Activated B cell treated with CpG ODN at 0.5 μM for 24 hours (primary cell): ENCODE measurements at regions of chrX and their contacts with region 1.

Region 1: GRCh38 chrX:119698845-119699244 is 5.9 kb upstream of the SEPTIN6 start:
- DNase-seq: no peak
- ATAC-seq: peak; percentile 19
- H3K4me3 Mint-ChIP-seq: no peak overlapping the region
- H3K27ac Mint-ChIP-seq: no peak overlapping the region
- H3K4me1 Mint-ChIP-seq: peaks cover 47% of the 10 kb centered on the region
- H3K27me3 Mint-ChIP-seq: no peaks in the 10 kb centered on the region
- CTCF ChIP-seq: no peak

Region 2: GRCh38 chrX:119729408-119730201 is 30.8 kb after region 1 on chrX:
- CTCF ChIA-PET with region 1: interaction called, 5 read pairs
- POLR2A ChIA-PET with region 1: no interaction called
- intact Hi-C with region 1: loop called (anchors 5 kb)
- DNase-seq: peak; percentile 30
- ATAC-seq: peak; percentile 57
- H3K4me3 Mint-ChIP-seq: no peak overlapping the region
- H3K27ac Mint-ChIP-seq: no peak overlapping the region
- H3K4me1 Mint-ChIP-seq: peaks cover 2% of the 10 kb centered on the region
- H3K27me3 Mint-ChIP-seq: no peaks in the 10 kb centered on the region
- CTCF ChIP-seq: no peak